Aorta (tissue), 5 donors: ENCODE measurements at regions of chr21 and their contacts with region 1.

Region 1: DNA sequence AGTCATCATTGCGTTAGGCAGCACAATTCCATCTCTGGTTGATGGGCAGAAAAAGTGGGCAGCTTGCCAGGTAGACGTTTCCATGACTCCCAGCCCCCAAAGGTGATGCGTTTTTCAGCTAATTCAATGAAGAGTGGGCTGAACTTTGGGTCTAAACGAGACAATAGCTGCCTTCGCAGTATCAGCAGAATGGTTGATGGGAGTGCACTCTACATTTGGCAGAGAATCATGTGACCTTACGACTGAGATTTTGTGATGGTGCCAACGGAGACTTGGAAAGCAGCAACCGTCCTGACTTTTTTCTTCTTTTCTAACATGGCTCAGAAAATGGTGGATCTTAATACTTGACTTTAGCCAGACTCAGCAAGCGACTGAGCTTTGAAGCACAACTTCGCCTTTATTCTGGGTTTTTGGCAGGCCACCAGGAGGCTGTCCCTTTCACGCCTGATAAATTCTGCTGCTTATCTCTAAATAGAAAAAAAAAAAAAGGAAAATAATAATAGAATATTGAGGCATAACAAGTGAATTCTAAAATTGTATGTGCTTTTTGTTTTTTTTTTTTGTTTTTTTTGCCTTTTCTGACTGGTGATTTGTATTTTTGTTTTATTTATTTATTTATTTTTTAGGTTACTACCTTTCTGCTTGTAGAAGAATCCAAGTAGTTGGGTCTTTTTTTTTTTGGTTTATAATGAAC is 804.8 kb downstream of the USP25 start:
- DNase-seq: peak; percentile 72 to 79
- ATAC-seq: peak; percentile 81
- H3K4me3 ChIP-seq: peak overlapping the region; percentile 58 to 98
- H3K27ac ChIP-seq: peak overlapping the region; percentile 59 to 95
- H3K4me1 ChIP-seq: no peaks in the 10 kb centered on the region
- H3K27me3 ChIP-seq: no peaks in the 10 kb centered on the region

Region 2: DNA sequence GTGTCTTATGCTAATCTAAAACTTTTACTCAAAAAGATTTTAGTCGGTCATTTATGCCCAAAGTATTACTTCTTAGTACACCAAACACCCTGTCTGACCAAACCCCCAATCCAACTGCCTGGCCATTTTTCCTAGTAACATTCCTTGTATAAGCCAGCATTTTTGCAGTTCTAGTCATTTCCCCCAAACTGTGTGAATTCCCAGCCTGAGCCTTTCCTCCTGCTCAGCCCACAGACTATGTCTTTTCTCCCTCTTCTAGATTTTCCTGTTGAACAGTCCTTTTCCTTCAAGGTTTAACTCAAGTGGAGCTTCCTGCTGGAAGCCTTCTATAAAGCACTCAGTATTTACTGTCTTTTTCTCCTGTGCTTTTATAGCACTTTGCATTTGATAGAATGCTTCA is 39.0 kb after region 1 on chr21:
- intact Hi-C with region 1: loop called in 1 of 2 experiments (anchors 5 kb)
- DNase-seq: no peak
- ATAC-seq: no peak
- H3K4me3 ChIP-seq: no peak overlapping the region
- H3K27ac ChIP-seq: no peak overlapping the region
- H3K4me1 ChIP-seq: peaks cover 0 to 2% of the 10 kb centered on the region in 2 donors
- H3K27me3 ChIP-seq: no peaks in the 10 kb centered on the region

Region 3: GRCh38 chr21:16588433-16588860 is 53.9 kb after region 1 on chr21:
- intact Hi-C with region 1: loop called in 1 of 2 experiments (anchors 5 kb)
- DNase-seq: peak; percentile 75 to 85
- ATAC-seq: peak; percentile 87
- H3K4me3 ChIP-seq: peak overlapping the region; percentile 45 to 54
- H3K27ac ChIP-seq: no peak overlapping the region
- H3K4me1 ChIP-seq: no peaks in the 10 kb centered on the region
- H3K27me3 ChIP-seq: no peaks in the 10 kb centered on the region